ENCODE measurements at regions of chr7 and their contacts with region 1.

Region 1: GRCh38 chr7:36315309-36316133 is 74.1 kb upstream of the ANLN start:
- DNase-seq: peak in 1 of 2 donors; percentile 69
- H3K4me3 ChIP-seq: no peak overlapping the region
- H3K27ac ChIP-seq: peak overlapping the region in 2 of 5 donors; percentile 10 to 41
- H3K4me1 ChIP-seq: peaks cover 4 to 11% (median 8%) of the 10 kb centered on the region in 4 donors
- H3K27me3 ChIP-seq: no peaks in the 10 kb centered on the region
- CTCF ChIP-seq: no peak
- EP300 ChIP-seq: no peak
- POLR2A ChIP-seq: no peak

Region 2: GRCh38 chr7:35985126-35985754 is 330.3 kb before region 1 on chr7:
- intact Hi-C with region 1: loop called (anchors 5 kb)
- DNase-seq: peak; percentile 87 to 93
- H3K4me3 ChIP-seq: no peak overlapping the region
- H3K27ac ChIP-seq: no peak overlapping the region
- H3K4me1 ChIP-seq: peaks cover 0 to 28% (median 19%) of the 10 kb centered on the region in 4 donors
- H3K27me3 ChIP-seq: no peaks in the 10 kb centered on the region
- CTCF ChIP-seq: peak in 6 of 7 experiments; percentile 76 to 97 (median 92)
- EP300 ChIP-seq: no peak
- POLR2A ChIP-seq: no peak

Region 3: GRCh38 chr7:36171503-36171902 is 144.0 kb before region 1 on chr7:
- intact Hi-C with region 1: no loop called
- DNase-seq: no peak
- H3K4me3 ChIP-seq: no peak overlapping the region
- H3K27ac ChIP-seq: no peak overlapping the region
- H3K4me1 ChIP-seq: peaks cover 0 to 29% (median 12%) of the 10 kb centered on the region in 4 donors
- H3K27me3 ChIP-seq: no peaks in the 10 kb centered on the region
- CTCF ChIP-seq: no peak
- EP300 ChIP-seq: no peak
- POLR2A ChIP-seq: no peak

Measured in stomach (tissue), 19 donors.